ENCODE measurements at regions of chr3 and their contacts with region 1.

Region 1: GRCh38 chr3:129039271-129040038 is 21.1 kb upstream of the GP9 start:
- DNase-seq: peak in 3 of 5 donors; percentile 52 to 83 (median 69)
- ATAC-seq: peak in 3 of 4 donors; percentile 56 to 63 (median 56)
- H3K4me3 ChIP-seq: no peak overlapping the region
- H3K27ac ChIP-seq: no peak overlapping the region
- H3K4me1 ChIP-seq: no peaks in the 10 kb centered on the region
- H3K27me3 ChIP-seq: no peaks in the 10 kb centered on the region
- CTCF ChIP-seq: no peak
- POLR2A ChIP-seq: no peak

Region 2: DNA sequence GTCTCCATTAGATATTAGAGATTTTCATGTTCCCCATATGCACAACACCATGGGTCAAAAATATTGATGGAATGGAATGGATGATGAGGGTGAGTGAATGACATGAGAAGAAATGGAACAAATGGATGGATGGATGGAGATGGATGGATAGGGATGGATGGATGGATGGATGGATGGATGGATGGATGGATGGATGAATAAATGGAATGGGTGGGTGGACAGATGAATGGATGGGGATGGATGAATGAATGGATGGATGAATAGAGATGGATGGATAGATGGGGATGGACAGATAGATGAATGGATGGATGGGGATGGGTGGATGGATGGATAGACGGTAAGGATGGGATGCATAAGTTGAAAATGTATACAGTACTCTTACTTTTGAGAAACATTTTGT is 64.2 kb before region 1 on chr3:
- intact Hi-C with region 1: loop called in 2 of 10 experiments (anchors 5 to 10 kb)
- DNase-seq: no peak
- ATAC-seq: no peak
- H3K4me3 ChIP-seq: no peak overlapping the region
- H3K27ac ChIP-seq: no peak overlapping the region
- H3K4me1 ChIP-seq: peaks cover 0 to 18% (median 11%) of the 10 kb centered on the region in 12 donors
- H3K27me3 ChIP-seq: no peaks in the 10 kb centered on the region
- CTCF ChIP-seq: no peak
- POLR2A ChIP-seq: no peak

Region 3: DNA sequence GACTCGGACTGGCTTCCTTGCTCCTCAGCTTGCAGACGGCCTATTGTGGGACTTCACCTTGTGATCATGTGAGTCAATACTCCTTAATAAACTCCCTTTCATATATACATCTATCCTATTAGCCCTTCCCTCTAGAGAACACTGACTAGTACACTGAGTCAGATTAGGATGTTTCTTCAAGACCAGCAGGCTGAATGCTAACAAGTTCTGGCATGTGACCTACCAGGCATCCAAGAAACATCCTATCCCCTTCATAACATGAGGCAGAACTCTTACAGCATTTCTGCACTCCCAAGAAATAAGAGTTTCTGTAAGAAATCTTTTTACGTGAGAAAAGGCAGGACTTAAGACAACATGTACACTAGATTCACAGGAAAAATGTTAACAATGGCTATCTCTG is 54.9 kb before region 1 on chr3:
- intact Hi-C with region 1: loop called in 2 of 10 experiments (anchors 5 to 10 kb)
- DNase-seq: no peak
- ATAC-seq: no peak
- H3K4me3 ChIP-seq: no peak overlapping the region
- H3K27ac ChIP-seq: no peak overlapping the region
- H3K4me1 ChIP-seq: no peaks in the 10 kb centered on the region
- H3K27me3 ChIP-seq: no peaks in the 10 kb centered on the region
- CTCF ChIP-seq: no peak
- POLR2A ChIP-seq: no peak

Region 4: GRCh38 chr3:129077222-129077621 is 37.8 kb after region 1 on chr3:
- intact Hi-C with region 1: no loop called
- DNase-seq: no peak
- ATAC-seq: no peak
- H3K4me3 ChIP-seq: no peak overlapping the region
- H3K27ac ChIP-seq: no peak overlapping the region
- H3K4me1 ChIP-seq: no peaks in the 10 kb centered on the region
- H3K27me3 ChIP-seq: no peaks in the 10 kb centered on the region
- CTCF ChIP-seq: no peak
- POLR2A ChIP-seq: no peak

Region 5: GRCh38 chr3:129106331-129106730 is 66.9 kb after region 1 on chr3:
- intact Hi-C with region 1: no loop called
- DNase-seq: no peak
- ATAC-seq: peak in 2 of 4 donors; percentile 40 to 71
- H3K4me3 ChIP-seq: no peak overlapping the region
- H3K27ac ChIP-seq: no peak overlapping the region
- H3K4me1 ChIP-seq: peaks cover 0 to 26% (median 7%) of the 10 kb centered on the region in 12 donors
- H3K27me3 ChIP-seq: no peaks in the 10 kb centered on the region
- CTCF ChIP-seq: peak in 1 of 12 donors; percentile 11
- POLR2A ChIP-seq: no peak

Region 6: GRCh38 chr3:130236417-130236816 is 1197.0 kb after region 1 on chr3:
- intact Hi-C with region 1: no loop called
- DNase-seq: no peak
- ATAC-seq: no peak
- H3K4me3 ChIP-seq: no peak overlapping the region
- H3K27ac ChIP-seq: no peak overlapping the region
- H3K4me1 ChIP-seq: no peaks in the 10 kb centered on the region
- H3K27me3 ChIP-seq: peaks cover 0 to 11% (median 0%) of the 10 kb centered on the region in 9 donors
- CTCF ChIP-seq: no peak
- POLR2A ChIP-seq: no peak

Measured in heart left ventricle (tissue), 16 donors.